ENCODE measurements at regions of chr14 and their contacts with region 1.

Region 1: GRCh38 chr14:45267071-45267470 is 14.1 kb upstream of the MIS18BP1 start:
- DNase-seq: no peak
- H3K4me3 ChIP-seq: no peak overlapping the region
- H3K27ac ChIP-seq: no peak overlapping the region
- H3K4me1 ChIP-seq: no peaks in the 10 kb centered on the region
- H3K27me3 ChIP-seq: no peaks in the 10 kb centered on the region
- CTCF ChIP-seq: no peak
- POLR2A ChIP-seq: no peak

Region 2: GRCh38 chr14:44912041-44912869 is 354.8 kb before region 1 on chr14:
- intact Hi-C with region 1: loop called (anchors 10 kb)
- DNase-seq: no peak
- H3K4me3 ChIP-seq: peak overlapping the region; percentile 32 to 73 (median 53)
- H3K27ac ChIP-seq: peak overlapping the region in 2 of 4 donors; percentile 22 to 25
- H3K4me1 ChIP-seq: peaks cover 0 to 30% (median 0%) of the 10 kb centered on the region in 3 donors
- H3K27me3 ChIP-seq: peaks cover 0 to 32% (median 0%) of the 10 kb centered on the region in 4 donors
- CTCF ChIP-seq: no peak
- POLR2A ChIP-seq: no peak